ENCODE measurements at regions of chr9 and their contacts with region 1.

Region 1: GRCh38 chr9:92963831-92964626 is 16.7 kb downstream of the FGD3 start:
- DNase-seq: peak; percentile 77
- H3K4me3 Mint-ChIP-seq: peak overlapping the region; percentile 98
- H3K27ac Mint-ChIP-seq: peak overlapping the region; percentile 97
- H3K4me1 Mint-ChIP-seq: peaks cover 69% of the 10 kb centered on the region
- H3K27me3 Mint-ChIP-seq: no peaks in the 10 kb centered on the region

Region 2: GRCh38 chr9:93058355-93059096 is 94.5 kb after region 1 on chr9 and contains the start of gene SUSD3:
- intact Hi-C with region 1: loop called (anchors 2 kb)
- DNase-seq: peak; percentile 70
- H3K4me3 Mint-ChIP-seq: peak within 1 kb of the TSS; percentile 91
- H3K27ac Mint-ChIP-seq: peak within 1 kb of the TSS; percentile 94
- H3K4me1 Mint-ChIP-seq: peaks cover 51% of the 10 kb centered on the region
- H3K27me3 Mint-ChIP-seq: no peaks in the 10 kb centered on the region
- total RNA-seq, gene SUSD3: 31.7 and 33.2 TPM in 2 replicates

Measured in activated T-helper 1 cell treated with anti-CD3 and anti-CD28 coated beads, Interleukin-12 subunit alpha, Interleukin-12 subunit beta, Interleukin-2, Interleukin-4 antibody, amounts not matched to agents 30 ng/mL and 10 ng/mL and 1 ng/mL, durations not matched to agents 14 hours and 24 hours and 36 hours (primary cell).